A673 (cell line): ENCODE measurements at regions of chr1 and their contacts with region 1.

Region 1: GRCh38 chr1:65254319-65255034 is 54.9 kb upstream of the DNAJC6 start:
- DNase-seq: peak; percentile 82
- H3K4me3 ChIP-seq: peak overlapping the region; percentile 59
- H3K27ac ChIP-seq: no peak overlapping the region
- H3K4me1 ChIP-seq: peaks cover 6% of the 10 kb centered on the region
- H3K27me3 ChIP-seq: peaks cover 13% of the 10 kb centered on the region
- CTCF ChIP-seq: no peak; the same call in 1 of the 2 replicates

Region 2: GRCh38 chr1:65419681-65420589 is 165.5 kb after region 1 on chr1:
- CTCF ChIA-PET with region 1: no interaction called
- POLR2A ChIA-PET with region 1: no interaction called
- intact Hi-C with region 1: loop called (anchors 5 kb)
- DNase-seq: peak; percentile 97
- H3K4me3 ChIP-seq: peak overlapping the region; percentile 66
- H3K27ac ChIP-seq: peak overlapping the region; percentile 89
- H3K4me1 ChIP-seq: peaks cover 5% of the 10 kb centered on the region
- H3K27me3 ChIP-seq: peaks cover 5% of the 10 kb centered on the region
- CTCF ChIP-seq: no peak